ENCODE measurements at regions of chr1 and their contacts with region 1.

Region 1: GRCh38 chr1:203504397-203505250 is 10.7 kb downstream of the OPTC start:
- DNase-seq: peak; percentile 77 to 87
- H3K4me3 ChIP-seq: no peak overlapping the region
- H3K4me3 Mint-ChIP-seq: no peak overlapping the region
- H3K27ac Mint-ChIP-seq: no peak overlapping the region
- H3K4me1 ChIP-seq: peaks cover 9% of the 10 kb centered on the region; the same call in 1 of the 2 replicates
- H3K4me1 Mint-ChIP-seq: peaks cover 10% of the 10 kb centered on the region
- H3K27me3 ChIP-seq: no peaks in the 10 kb centered on the region
- H3K27me3 Mint-ChIP-seq: peaks cover 9% of the 10 kb centered on the region
- CTCF ChIP-seq: peak; percentile 68 to 77

Region 2: GRCh38 chr1:203463469-203464062 is 41.1 kb before region 1 on chr1:
- CTCF ChIA-PET with region 1: no interaction called
- POLR2A ChIA-PET with region 1: no interaction called
- intact Hi-C with region 1: no loop called
- DNase-seq: no peak
- H3K4me3 ChIP-seq: no peak overlapping the region
- H3K4me3 Mint-ChIP-seq: no peak overlapping the region
- H3K27ac Mint-ChIP-seq: no peak overlapping the region
- H3K4me1 ChIP-seq: no peaks in the 10 kb centered on the region
- H3K4me1 Mint-ChIP-seq: no peaks in the 10 kb centered on the region
- H3K27me3 ChIP-seq: no peaks in the 10 kb centered on the region
- H3K27me3 Mint-ChIP-seq: peaks cover 19% of the 10 kb centered on the region
- CTCF ChIP-seq: no peak

Region 3: DNA sequence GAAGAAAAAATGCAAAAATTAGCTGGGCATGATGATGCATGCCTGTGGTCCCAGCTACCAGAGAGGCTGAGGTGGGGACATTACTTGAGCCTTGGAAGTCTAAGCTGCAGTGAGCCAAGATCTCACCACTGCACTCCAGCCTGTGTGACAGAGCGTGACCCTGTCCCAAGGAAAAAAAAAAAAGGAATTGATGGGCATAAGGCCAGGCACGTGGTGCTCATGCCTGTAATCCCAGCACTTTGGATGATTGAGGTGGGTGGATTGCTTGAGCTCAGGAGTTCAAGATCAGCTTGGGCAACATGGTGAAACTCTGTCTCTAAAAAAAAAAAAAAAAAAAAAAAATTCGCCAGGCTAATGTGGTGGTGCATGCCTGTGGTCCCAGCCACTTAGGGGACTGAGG is 66.2 kb after region 1 on chr1:
- CTCF ChIA-PET with region 1: no interaction called
- POLR2A ChIA-PET with region 1: interaction called, 10 read pairs
- intact Hi-C with region 1: no loop called
- DNase-seq: no peak
- H3K4me3 ChIP-seq: no peak overlapping the region
- H3K4me3 Mint-ChIP-seq: no peak overlapping the region
- H3K27ac Mint-ChIP-seq: no peak overlapping the region
- H3K4me1 ChIP-seq: no peaks in the 10 kb centered on the region
- H3K4me1 Mint-ChIP-seq: peaks cover 7% of the 10 kb centered on the region
- H3K27me3 ChIP-seq: no peaks in the 10 kb centered on the region
- H3K27me3 Mint-ChIP-seq: no peaks in the 10 kb centered on the region
- CTCF ChIP-seq: no peak

Region 4: GRCh38 chr1:203593723-203594122 is 89.1 kb after region 1 on chr1:
- CTCF ChIA-PET with region 1: interaction called, 5 read pairs
- POLR2A ChIA-PET with region 1: no interaction called
- intact Hi-C with region 1: loop called (anchors 10 kb)
- DNase-seq: peak in 1 of 2 experiments; percentile 40
- H3K4me3 ChIP-seq: no peak overlapping the region
- H3K4me3 Mint-ChIP-seq: no peak overlapping the region
- H3K27ac Mint-ChIP-seq: no peak overlapping the region
- H3K4me1 ChIP-seq: no peaks in the 10 kb centered on the region; the same call in 1 of the 2 replicates
- H3K4me1 Mint-ChIP-seq: peaks cover 7% of the 10 kb centered on the region
- H3K27me3 ChIP-seq: no peaks in the 10 kb centered on the region
- H3K27me3 Mint-ChIP-seq: no peaks in the 10 kb centered on the region
- CTCF ChIP-seq: peak in 1 of 2 experiments; percentile 52

Region 5: DNA sequence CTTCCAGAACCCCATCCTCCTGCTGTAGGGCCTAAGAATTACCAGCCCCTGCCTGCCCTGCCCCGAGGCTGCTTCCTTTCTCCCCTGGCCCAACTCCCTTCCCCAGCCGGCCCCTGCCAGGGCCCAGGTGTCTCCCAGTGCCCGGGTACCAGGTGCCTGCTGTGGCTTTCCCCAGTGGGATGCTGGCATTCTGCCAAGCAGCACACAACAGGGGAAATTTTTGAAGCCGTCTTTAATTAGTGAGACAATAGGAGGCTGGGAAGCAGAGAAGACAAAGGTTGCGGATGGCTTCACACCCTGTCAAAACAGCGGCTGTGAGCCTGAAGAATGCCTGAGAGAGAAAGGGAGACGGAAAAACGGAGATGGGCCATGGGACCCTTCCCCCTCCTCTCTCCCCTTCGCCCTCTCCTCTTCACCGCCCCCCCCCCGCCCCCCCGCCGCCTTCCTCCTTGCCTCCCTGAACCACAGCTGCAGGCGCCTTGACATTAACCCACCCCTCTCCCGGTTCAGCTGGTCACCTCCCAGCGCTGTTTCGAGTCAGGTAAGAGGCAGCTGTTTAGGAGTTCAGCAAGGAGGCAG is 1147.3 kb after region 1 on chr1:
- CTCF ChIA-PET with region 1: no interaction called
- POLR2A ChIA-PET with region 1: no interaction called
- intact Hi-C with region 1: no loop called
- DNase-seq: no peak
- H3K4me3 ChIP-seq: no peak overlapping the region
- H3K4me3 Mint-ChIP-seq: no peak overlapping the region
- H3K27ac Mint-ChIP-seq: no peak overlapping the region
- H3K4me1 ChIP-seq: 0 out of 2 replicates have a peak, but pooled peaks cover 3% of the 10 kb centered on the region
- H3K4me1 Mint-ChIP-seq: peaks cover 6% of the 10 kb centered on the region
- H3K27me3 ChIP-seq: peaks cover 1% of the 10 kb centered on the region; the same call in 1 of the 2 replicates
- H3K27me3 Mint-ChIP-seq: peaks cover 15% of the 10 kb centered on the region
- CTCF ChIP-seq: no peak

Measured in Caco-2 (cell line).